Activated naive CD4-positive, alpha-beta T cell treated with anti-CD3 and anti-CD28 coated beads for 36 hours (primary cell): ENCODE measurements at regions of chr2 and their contacts with region 1.

Region 1: GRCh38 chr2:12430407-12431133 is 286.2 kb upstream of the TRIB2 start:
- DNase-seq: peak; percentile 36
- H3K4me3 Mint-ChIP-seq: no peak overlapping the region
- H3K27ac Mint-ChIP-seq: no peak overlapping the region
- H3K4me1 Mint-ChIP-seq: peaks cover 30% of the 10 kb centered on the region
- H3K27me3 Mint-ChIP-seq: no peaks in the 10 kb centered on the region

Region 2: DNA sequence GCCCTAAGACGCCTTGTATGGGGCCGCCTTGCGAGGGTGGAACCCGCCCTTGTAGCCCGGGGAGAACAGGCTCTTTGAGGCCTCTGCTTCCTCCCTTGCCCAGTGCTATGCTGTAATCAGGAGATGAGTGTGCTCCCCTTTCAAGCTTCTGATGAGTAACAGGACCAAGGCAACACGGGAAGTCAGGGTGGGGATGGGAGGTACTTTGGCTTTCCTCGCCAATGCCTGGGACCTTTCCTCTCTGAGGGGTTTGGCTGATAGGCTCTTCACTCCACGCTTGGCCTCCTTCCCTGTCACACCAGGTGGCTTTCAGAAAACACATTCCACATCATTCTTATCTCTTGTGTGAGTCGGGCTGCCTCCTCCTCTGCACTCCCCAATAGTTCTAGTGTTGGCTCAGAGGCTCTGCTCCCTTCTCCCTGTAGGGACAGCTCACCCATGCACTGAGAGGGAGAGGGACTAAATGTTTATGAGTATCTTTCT is 62.5 kb after region 1 on chr2:
- CTCF ChIA-PET with region 1: no interaction called
- intact Hi-C with region 1: loop called (anchors 2 kb)
- DNase-seq: peak; percentile 81
- H3K4me3 Mint-ChIP-seq: peak overlapping the region; percentile 34
- H3K27ac Mint-ChIP-seq: peak overlapping the region; percentile 85
- H3K4me1 Mint-ChIP-seq: peaks cover 61% of the 10 kb centered on the region
- H3K27me3 Mint-ChIP-seq: no peaks in the 10 kb centered on the region